CD4-positive, alpha-beta T cell (primary cell): ENCODE measurements at regions of chr10 and their contacts with region 1.

Region 1: GRCh38 chr10:85607043-85607695 is 759.4 kb downstream of the GRID1 start:
- DNase-seq: no peak
- ATAC-seq: no peak
- H3K4me3 ChIP-seq: no peak overlapping the region
- H3K4me3 Mint-ChIP-seq: no peak overlapping the region
- H3K27ac ChIP-seq: no peak overlapping the region
- H3K27ac Mint-ChIP-seq: no peak overlapping the region
- H3K4me1 ChIP-seq: peaks cover 38% of the 10 kb centered on the region
- H3K4me1 Mint-ChIP-seq: peaks cover 47% of the 10 kb centered on the region
- H3K27me3 ChIP-seq: no peaks in the 10 kb centered on the region
- H3K27me3 Mint-ChIP-seq: no peaks in the 10 kb centered on the region
- CTCF ChIP-seq: no peak

Region 2: DNA sequence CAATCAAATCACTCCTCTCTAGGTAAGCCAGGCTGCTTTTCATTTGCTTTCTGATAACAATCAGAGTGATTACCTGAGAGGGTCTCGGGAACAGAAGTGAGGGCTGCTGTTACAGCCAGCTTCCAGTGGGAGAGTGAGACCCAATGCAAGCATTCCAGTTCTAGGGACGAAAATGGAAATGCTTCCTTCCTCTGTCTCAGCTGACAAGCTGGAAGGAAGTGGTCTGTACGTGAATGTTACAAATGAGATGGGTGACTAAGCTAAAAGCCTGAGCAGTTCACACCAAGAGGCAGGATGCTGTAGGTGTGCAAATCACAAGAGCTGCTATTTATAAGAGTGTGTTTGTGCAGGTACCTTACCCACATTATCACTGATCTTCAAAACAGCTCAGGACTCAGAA is 12.9 kb before region 1 on chr10:
- CTCF ChIA-PET with region 1: no interaction called
- POLR2A ChIA-PET with region 1: interaction called, 28 read pairs
- intact Hi-C with region 1: loop called in 1 of 2 experiments (anchors 2 kb)
- DNase-seq: peak in 1 of 14 experiments; percentile 36
- ATAC-seq: peak; percentile 43
- H3K4me3 ChIP-seq: no peak overlapping the region
- H3K4me3 Mint-ChIP-seq: no peak overlapping the region
- H3K27ac ChIP-seq: no peak overlapping the region
- H3K27ac Mint-ChIP-seq: peak overlapping the region; percentile 19
- H3K4me1 ChIP-seq: peaks cover 18% of the 10 kb centered on the region
- H3K4me1 Mint-ChIP-seq: peaks cover 19% of the 10 kb centered on the region
- H3K27me3 ChIP-seq: no peaks in the 10 kb centered on the region
- H3K27me3 Mint-ChIP-seq: no peaks in the 10 kb centered on the region
- CTCF ChIP-seq: no peak

Region 3: GRCh38 chr10:85791818-85792532 is 184.8 kb after region 1 on chr10:
- CTCF ChIA-PET with region 1: no interaction called
- POLR2A ChIA-PET with region 1: no interaction called
- intact Hi-C with region 1: no loop called
- DNase-seq: no peak
- ATAC-seq: no peak
- H3K4me3 ChIP-seq: no peak overlapping the region
- H3K4me3 Mint-ChIP-seq: no peak overlapping the region
- H3K27ac ChIP-seq: no peak overlapping the region
- H3K27ac Mint-ChIP-seq: no peak overlapping the region
- H3K4me1 ChIP-seq: no peaks in the 10 kb centered on the region
- H3K4me1 Mint-ChIP-seq: no peaks in the 10 kb centered on the region
- H3K27me3 ChIP-seq: peaks cover 0 to 2% of the 10 kb centered on the region in 2 experiments
- H3K27me3 Mint-ChIP-seq: peaks cover 5% of the 10 kb centered on the region
- CTCF ChIP-seq: no peak